ENCODE measurements at regions of chrX and their contacts with region 1.

Region 1: DNA sequence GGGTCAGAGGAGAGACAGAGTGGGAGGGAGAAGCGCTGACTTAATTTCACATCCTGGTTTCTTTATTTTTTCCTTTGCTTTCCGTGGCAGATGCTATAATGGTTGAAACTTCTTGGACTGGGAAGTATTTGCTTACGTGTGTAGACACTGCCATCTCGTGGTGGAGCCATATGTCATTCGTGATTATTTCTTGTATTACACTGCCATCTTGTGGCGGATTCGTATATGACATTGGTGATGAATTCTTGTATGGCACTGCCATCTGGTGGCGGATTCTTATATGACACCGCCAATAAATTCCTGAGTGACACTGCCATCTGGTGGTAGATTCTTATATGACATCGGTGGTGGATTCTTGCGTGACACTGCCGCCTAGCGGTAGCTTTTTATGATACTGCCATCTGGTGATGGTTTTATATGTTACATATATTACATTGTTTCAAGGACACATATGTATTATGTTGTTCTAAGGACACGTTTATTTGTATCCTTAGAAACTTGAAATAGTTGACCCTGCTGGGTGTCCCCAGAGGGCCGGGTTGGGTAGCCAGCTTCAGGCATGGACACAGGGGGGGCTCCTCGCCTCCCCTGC is 37.3 kb upstream of the CLCN4 start:
- DNase-seq: peak; percentile 77
- H3K4me3 Mint-ChIP-seq: no peak overlapping the region
- H3K27ac Mint-ChIP-seq: peak overlapping the region; percentile 7
- H3K4me1 Mint-ChIP-seq: peaks cover 4% of the 10 kb centered on the region
- H3K27me3 Mint-ChIP-seq: no peaks in the 10 kb centered on the region

Region 2: DNA sequence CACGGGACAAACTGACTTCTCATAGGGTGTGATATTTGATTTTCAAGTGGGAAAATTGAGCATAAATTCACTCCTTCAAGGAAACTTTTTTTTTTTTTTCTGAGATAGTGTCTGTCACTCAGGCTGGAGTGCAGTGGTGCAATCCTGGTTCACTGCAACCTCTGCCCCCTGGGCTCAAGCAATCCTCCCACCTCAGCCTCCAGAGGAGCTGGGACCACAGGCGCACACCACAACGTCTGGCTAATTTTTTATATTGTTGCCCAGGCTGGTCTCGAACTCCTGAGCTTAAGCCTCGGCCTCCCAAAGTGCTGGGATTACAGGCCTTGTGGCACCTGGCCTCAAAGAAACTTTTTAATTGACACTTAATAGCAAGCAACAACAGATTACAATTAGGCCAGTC is 138.6 kb before region 1 on chrX:
- CTCF ChIA-PET with region 1: interaction called, 20 read pairs
- POLR2A ChIA-PET with region 1: no interaction called
- DNase-seq: no peak
- H3K4me3 Mint-ChIP-seq: no peak overlapping the region
- H3K27ac Mint-ChIP-seq: no peak overlapping the region
- H3K4me1 Mint-ChIP-seq: no peaks in the 10 kb centered on the region
- H3K27me3 Mint-ChIP-seq: no peaks in the 10 kb centered on the region

Region 3: GRCh38 chrX:10011261-10011931 is 108.1 kb before region 1 on chrX:
- CTCF ChIA-PET with region 1: interaction called, 14 read pairs
- POLR2A ChIA-PET with region 1: no interaction called
- DNase-seq: no peak
- H3K4me3 Mint-ChIP-seq: no peak overlapping the region
- H3K27ac Mint-ChIP-seq: peak overlapping the region; percentile 64
- H3K4me1 Mint-ChIP-seq: peaks cover 18% of the 10 kb centered on the region
- H3K27me3 Mint-ChIP-seq: peaks cover 6% of the 10 kb centered on the region

Region 4: DNA sequence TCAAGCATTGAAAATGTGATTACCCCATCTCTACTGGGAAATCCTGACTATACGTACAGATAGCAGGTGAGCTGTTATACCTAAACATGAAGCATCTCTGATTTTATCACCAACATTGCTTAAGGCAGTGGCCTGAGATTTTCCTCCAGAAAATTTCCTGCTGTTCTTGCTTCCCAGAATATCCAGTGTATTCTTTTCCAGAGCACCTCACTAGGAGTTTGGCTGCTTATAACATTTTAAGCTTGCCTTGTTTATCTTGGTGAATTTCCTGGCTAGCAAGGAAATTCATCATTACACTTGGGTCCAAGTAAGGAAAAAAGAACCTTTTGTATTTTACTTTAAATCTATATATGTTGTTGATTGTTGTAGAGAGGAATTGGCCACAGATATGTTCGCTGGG is 35.7 kb before region 1 on chrX:
- CTCF ChIA-PET with region 1: interaction called, 14 read pairs
- POLR2A ChIA-PET with region 1: no interaction called
- DNase-seq: no peak
- H3K4me3 Mint-ChIP-seq: no peak overlapping the region
- H3K27ac Mint-ChIP-seq: no peak overlapping the region
- H3K4me1 Mint-ChIP-seq: peaks cover 37% of the 10 kb centered on the region
- H3K27me3 Mint-ChIP-seq: no peaks in the 10 kb centered on the region

Region 5: DNA sequence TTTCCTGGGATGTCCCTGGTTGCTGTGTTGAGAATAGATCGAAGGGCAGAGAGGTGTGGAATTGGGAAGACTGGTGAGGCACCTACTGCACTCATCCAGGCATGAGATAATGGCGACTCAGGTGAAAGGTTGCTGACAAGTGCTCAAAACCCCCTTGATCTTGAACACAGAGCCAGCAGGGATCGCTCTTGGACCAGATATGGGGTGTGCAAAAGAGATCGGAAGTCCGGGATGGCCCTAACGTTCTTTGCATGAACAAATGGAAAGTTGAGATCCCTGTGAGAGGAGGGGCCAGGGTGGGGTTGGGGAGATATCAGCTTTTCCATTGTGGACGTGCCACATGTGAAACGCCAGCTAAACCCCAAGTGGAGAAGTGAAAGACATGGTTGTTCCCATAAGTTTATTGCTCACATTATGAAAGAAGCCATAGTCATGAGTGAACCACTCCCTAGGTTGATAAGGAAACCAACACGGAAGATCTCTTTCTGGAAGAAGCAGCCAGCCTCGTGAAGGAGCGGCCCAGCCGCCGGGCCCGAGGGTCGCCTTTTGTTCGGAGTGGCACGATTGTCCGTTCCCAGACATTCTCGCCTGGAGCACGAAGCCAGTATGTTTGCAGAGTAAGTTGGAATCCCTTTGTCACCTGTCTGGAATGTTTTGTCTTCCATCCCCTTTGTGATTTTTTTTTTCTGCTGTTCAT is 14.6 kb after region 1 on chrX:
- CTCF ChIA-PET with region 1: interaction called, 10 read pairs
- POLR2A ChIA-PET with region 1: no interaction called
- DNase-seq: no peak
- H3K4me3 Mint-ChIP-seq: no peak overlapping the region
- H3K27ac Mint-ChIP-seq: no peak overlapping the region
- H3K4me1 Mint-ChIP-seq: no peaks in the 10 kb centered on the region
- H3K27me3 Mint-ChIP-seq: no peaks in the 10 kb centered on the region

Measured in activated CD4-positive, alpha-beta T cell treated with anti-CD3 and anti-CD28 coated beads, Interleukin-2, amount 10 ng/mL, durations not matched to agents 7 days and 5 days (primary cell).